K562 (cell line): ENCODE measurements at regions of chr5 and their contacts with region 1.

Region 1: DNA sequence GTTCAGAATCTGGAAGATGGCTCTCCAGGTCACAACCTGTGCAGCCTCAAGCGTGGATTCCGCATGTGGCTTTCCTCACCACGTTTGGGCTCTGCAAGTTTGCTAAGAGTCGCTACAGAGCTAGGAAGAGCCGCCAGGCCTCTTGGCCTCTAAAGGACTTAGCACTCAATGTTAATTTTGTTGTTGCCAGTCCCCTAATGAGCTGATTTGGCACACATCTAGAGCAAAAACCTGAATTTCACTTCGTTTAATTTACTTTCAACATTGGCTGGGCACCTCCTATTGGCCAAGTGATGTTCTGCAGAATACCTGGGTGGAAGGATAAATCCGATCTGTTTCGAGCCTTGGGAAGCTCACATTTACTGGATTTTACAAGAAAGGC is 65.8 kb upstream of the UNC5A start:
- DNase-seq: peak; percentile 28 to 39 (median 32)
- ATAC-seq: peak; percentile 54; the same call in 1 of the 3 replicates
- H3K4me3 ChIP-seq: no peak overlapping the region
- H3K27ac ChIP-seq: no peak overlapping the region
- H3K4me1 ChIP-seq: peaks cover 0 to 16% of the 10 kb centered on the region in 2 experiments; a peak in 2 of 5 replicates
- H3K27me3 ChIP-seq: peaks cover 69 to 90% of the 10 kb centered on the region in 2 experiments
- CTCF ChIP-seq: peak; percentile 41 to 60 (median 53); a peak in 5 of 6 replicates
- EP300 ChIP-seq: no peak
- POLR2A ChIP-seq: no peak
- RAD21 ChIP-seq: peak in 1 of 2 experiments; percentile 45; a peak in 2 of 4 replicates

Region 2: GRCh38 chr5:175809531-175810121 is 934.9 kb before region 1 on chr5:
- CTCF ChIA-PET with region 1: no interaction called
- POLR2A ChIA-PET with region 1: no interaction called
- in situ Hi-C with region 1: loop called (anchors 10 kb)
- intact Hi-C with region 1: no loop called
- DNase-seq: no peak
- ATAC-seq: no peak
- H3K4me3 ChIP-seq: no peak overlapping the region
- H3K27ac ChIP-seq: no peak overlapping the region
- H3K4me1 ChIP-seq: no peaks in the 10 kb centered on the region
- H3K27me3 ChIP-seq: peaks cover 4 to 30% of the 10 kb centered on the region in 2 experiments; a peak in 3 of 5 replicates
- CTCF ChIP-seq: no peak
- EP300 ChIP-seq: no peak
- POLR2A ChIP-seq: no peak
- RAD21 ChIP-seq: no peak

Region 3: GRCh38 chr5:176185133-176185733 is 559.3 kb before region 1 on chr5:
- CTCF ChIA-PET with region 1: no interaction called
- POLR2A ChIA-PET with region 1: no interaction called
- in situ Hi-C with region 1: no loop called
- intact Hi-C with region 1: no loop called
- DNase-seq: peak; percentile 19 to 80 (median 38)
- ATAC-seq: peak; percentile 79
- H3K4me3 ChIP-seq: peak overlapping the region; percentile 38
- H3K27ac ChIP-seq: peak overlapping the region; percentile 75
- H3K4me1 ChIP-seq: peaks cover 13 to 19% of the 10 kb centered on the region in 2 experiments
- H3K27me3 ChIP-seq: no peaks in the 10 kb centered on the region
- CTCF ChIP-seq: no peak
- EP300 ChIP-seq: peak; percentile 82
- POLR2A ChIP-seq: peak; percentile 61; the same call in 1 of the 2 replicates
- RAD21 ChIP-seq: no peak; a peak in 1 of 4 replicates

Region 4: GRCh38 chr5:176700239-176700847 is 44.2 kb before region 1 on chr5:
- CTCF ChIA-PET with region 1: no interaction called
- POLR2A ChIA-PET with region 1: no interaction called
- in situ Hi-C with region 1: no loop called
- intact Hi-C with region 1: loop called (anchors 2 kb)
- DNase-seq: peak; percentile 40 to 52 (median 46)
- ATAC-seq: peak; percentile 86
- H3K4me3 ChIP-seq: no peak overlapping the region
- H3K27ac ChIP-seq: no peak overlapping the region
- H3K4me1 ChIP-seq: peaks cover 0 to 4% of the 10 kb centered on the region in 2 experiments; a peak in 2 of 5 replicates
- H3K27me3 ChIP-seq: peaks cover 59 to 87% of the 10 kb centered on the region in 2 experiments
- CTCF ChIP-seq: peak; percentile 41 to 63 (median 43); a peak in 5 of 6 replicates
- EP300 ChIP-seq: no peak
- POLR2A ChIP-seq: no peak
- RAD21 ChIP-seq: peak in 1 of 2 experiments; percentile 45; a peak in 2 of 4 replicates